ENCODE measurements at regions of chr1 and their contacts with region 1.

Region 1: GRCh38 chr1:231421993-231422764 is at the start of gene EGLN1:
- DNase-seq: peak; percentile 56 to 86 (median 68)
- H3K4me3 ChIP-seq: peak within 1 kb of the TSS; percentile 59 to 96 (median 83)
- H3K27ac ChIP-seq: peak within 1 kb of the TSS; percentile 73 to 99 (median 96)
- H3K27me3 ChIP-seq: no peaks in the 10 kb centered on the region
- CTCF ChIP-seq: peak in 50 of 56 donors; percentile 13 to 64 (median 38)
- total RNA-seq, gene EGLN1: 28.2 to 54.6 (median 39.0) TPM

Region 2: GRCh38 chr1:231240883-231241735 is 181.1 kb before region 1 on chr1 and contains the start of gene GNPAT:
- intact Hi-C with region 1: loop called in 1 of 2 experiments (anchors 5 kb)
- DNase-seq: peak; percentile 69 to 94 (median 77)
- H3K4me3 ChIP-seq: peak within 1 kb of the TSS; percentile 63 to 99 (median 91)
- H3K27ac ChIP-seq: peak within 1 kb of the TSS in 56 of 59 donors; percentile 7 to 91 (median 80)
- H3K27me3 ChIP-seq: no peaks in the 10 kb centered on the region
- CTCF ChIP-seq: peak in 46 of 56 donors; percentile 14 to 62 (median 32)
- total RNA-seq, gene GNPAT: 23.2 to 39.6 (median 30.0) TPM

Region 3: GRCh38 chr1:231337472-231338269 is 84.5 kb before region 1 on chr1 and contains the start of gene EXOC8:
- intact Hi-C with region 1: loop called (anchors 2 kb)
- DNase-seq: peak; percentile 89 to 96 (median 92)
- H3K4me3 ChIP-seq: peak within 1 kb of the TSS; percentile 63 to 99 (median 92)
- H3K27ac ChIP-seq: peak within 1 kb of the TSS; percentile 51 to 97 (median 86)
- H3K27me3 ChIP-seq: no peaks in the 10 kb centered on the region
- CTCF ChIP-seq: peak in 19 of 56 donors; percentile 7 to 47 (median 22)
- total RNA-seq, gene EXOC8: 13.8 to 26.2 (median 20.8) TPM

Region 4: DNA sequence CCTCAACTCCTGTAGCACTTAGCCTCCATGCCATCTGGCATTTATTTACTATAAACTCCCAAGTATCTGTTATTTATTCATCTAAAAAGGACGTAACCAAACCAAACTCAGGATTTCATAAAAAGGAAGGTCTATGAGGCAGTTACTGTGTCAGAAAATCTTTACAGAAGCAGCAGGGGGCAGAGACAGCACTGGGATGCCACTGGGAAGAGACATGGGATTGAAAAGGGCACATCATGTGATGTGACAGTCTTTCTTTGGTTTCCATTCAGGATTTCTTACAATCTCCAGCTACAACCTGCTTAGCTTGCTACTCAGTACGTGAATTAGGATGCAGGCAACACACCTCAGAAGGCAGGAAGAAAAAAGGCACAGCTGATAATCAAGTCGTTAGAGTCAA is 52.9 kb before region 1 on chr1:
- intact Hi-C with region 1: loop called in 1 of 2 experiments (anchors 5 kb)
- DNase-seq: peak in 1 of 10 donors; percentile 24
- H3K4me3 ChIP-seq: no peak overlapping the region
- H3K27ac ChIP-seq: peak overlapping the region in 25 of 59 donors; percentile 1 to 72 (median 43)
- H3K27me3 ChIP-seq: no peaks in the 10 kb centered on the region
- CTCF ChIP-seq: peak in 52 of 56 donors; percentile 1 to 77 (median 50)

Region 5: GRCh38 chr1:231493421-231494185 is 71.4 kb after region 1 on chr1:
- intact Hi-C with region 1: no loop called
- DNase-seq: no peak
- H3K4me3 ChIP-seq: no peak overlapping the region
- H3K27ac ChIP-seq: no peak overlapping the region
- H3K27me3 ChIP-seq: no peaks in the 10 kb centered on the region
- CTCF ChIP-seq: peak in 2 of 56 donors; percentile 13 to 25

Region 6: GRCh38 chr1:231528172-231529029 is 106.2 kb after region 1 on chr1 and contains the start of gene TSNAX:
- intact Hi-C with region 1: loop called (anchors 1 to 2 kb)
- DNase-seq: peak; percentile 81 to 93 (median 88)
- H3K4me3 ChIP-seq: peak within 1 kb of the TSS; percentile 69 to 99 (median 89)
- H3K27ac ChIP-seq: peak within 1 kb of the TSS; percentile 80 to 99 (median 94)
- H3K27me3 ChIP-seq: no peaks in the 10 kb centered on the region
- CTCF ChIP-seq: peak in 26 of 56 donors; percentile 6 to 50 (median 26)
- total RNA-seq, gene TSNAX: 23.6 to 70.4 (median 49.5) TPM

Region 7: GRCh38 chr1:231584921-231585320 is 162.7 kb after region 1 on chr1:
- intact Hi-C with region 1: loop called in 1 of 2 experiments (anchors 5 kb)
- DNase-seq: no peak
- H3K4me3 ChIP-seq: no peak overlapping the region
- H3K27ac ChIP-seq: no peak overlapping the region
- H3K27me3 ChIP-seq: no peaks in the 10 kb centered on the region
- CTCF ChIP-seq: no peak